ENCODE measurements at regions of chr9 and their contacts with region 1.

Region 1: DNA sequence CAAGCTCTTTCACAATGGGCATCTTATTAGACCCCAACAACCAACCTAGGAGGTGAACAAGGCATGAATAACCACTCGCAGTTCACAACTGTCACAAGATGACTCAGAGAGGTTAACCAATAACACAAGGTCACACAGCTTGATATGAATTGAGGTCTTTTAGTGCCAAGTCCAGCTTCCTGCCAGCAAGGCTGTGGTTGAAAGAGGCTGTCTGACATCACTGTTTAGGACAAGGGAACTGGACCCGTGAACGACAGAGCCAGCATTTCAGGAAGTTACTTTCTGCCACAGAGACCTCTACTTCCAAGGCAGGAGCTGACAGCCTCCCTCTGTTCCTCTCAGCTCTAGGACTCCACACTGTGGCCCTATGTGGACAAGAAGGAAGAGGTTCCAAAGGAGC is 53.4 kb upstream of the ALDH1B1 start:
- DNase-seq: no peak
- H3K4me3 ChIP-seq: no peak overlapping the region
- H3K27ac ChIP-seq: no peak overlapping the region
- H3K4me1 ChIP-seq: peaks cover 0 to 3% (median 0%) of the 10 kb centered on the region in 4 donors
- H3K27me3 ChIP-seq: no peaks in the 10 kb centered on the region
- CTCF ChIP-seq: no peak

Region 2: GRCh38 chr9:38284588-38285051 is 54.5 kb before region 1 on chr9:
- intact Hi-C with region 1: loop called (anchors 10 kb)
- DNase-seq: no peak
- H3K4me3 ChIP-seq: no peak overlapping the region
- H3K27ac ChIP-seq: no peak overlapping the region
- H3K4me1 ChIP-seq: no peaks in the 10 kb centered on the region
- H3K27me3 ChIP-seq: peaks cover 0 to 7% of the 10 kb centered on the region in 2 donors
- CTCF ChIP-seq: no peak

Region 3: GRCh38 chr9:38318759-38319495 is 20.2 kb before region 1 on chr9:
- intact Hi-C with region 1: no loop called
- DNase-seq: no peak
- H3K4me3 ChIP-seq: peak overlapping the region; percentile 21 to 25
- H3K27ac ChIP-seq: peak overlapping the region; percentile 49 to 52
- H3K4me1 ChIP-seq: peaks cover 0 to 4% (median 0%) of the 10 kb centered on the region in 4 donors
- H3K27me3 ChIP-seq: no peaks in the 10 kb centered on the region
- CTCF ChIP-seq: no peak

Measured in tibial artery (tissue), 4 donors.